ENCODE measurements at regions of chr16 and their contacts with region 1.

Region 1: DNA sequence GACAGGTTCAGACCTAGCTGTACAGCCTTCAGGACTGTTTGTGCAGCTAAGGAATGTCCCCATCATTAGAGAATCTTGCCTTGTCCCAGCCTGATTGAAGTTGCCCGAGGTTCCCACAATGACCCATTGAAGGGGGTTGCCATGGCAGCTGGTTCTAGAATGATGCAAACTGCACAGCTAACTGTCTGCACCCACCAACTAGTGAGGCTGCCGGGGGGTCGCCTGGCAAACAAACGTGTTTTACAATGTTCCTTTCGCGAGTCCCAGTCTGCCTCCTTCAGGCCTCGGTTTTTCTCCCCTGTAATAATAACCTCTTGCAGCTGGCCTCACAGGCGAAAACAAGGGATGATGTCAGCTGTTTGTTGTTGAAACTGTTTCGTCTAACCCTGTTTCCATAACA is 5.5 kb downstream of the C16orf96 start:
- DNase-seq: no peak
- H3K4me3 ChIP-seq: no peak overlapping the region
- H3K27ac ChIP-seq: no peak overlapping the region
- H3K4me1 ChIP-seq: no peaks in the 10 kb centered on the region
- H3K27me3 ChIP-seq: peaks cover 0 to 7% of the 10 kb centered on the region in 2 experiments
- CTCF ChIP-seq: no peak
- POLR2A ChIP-seq: no peak

Region 2: DNA sequence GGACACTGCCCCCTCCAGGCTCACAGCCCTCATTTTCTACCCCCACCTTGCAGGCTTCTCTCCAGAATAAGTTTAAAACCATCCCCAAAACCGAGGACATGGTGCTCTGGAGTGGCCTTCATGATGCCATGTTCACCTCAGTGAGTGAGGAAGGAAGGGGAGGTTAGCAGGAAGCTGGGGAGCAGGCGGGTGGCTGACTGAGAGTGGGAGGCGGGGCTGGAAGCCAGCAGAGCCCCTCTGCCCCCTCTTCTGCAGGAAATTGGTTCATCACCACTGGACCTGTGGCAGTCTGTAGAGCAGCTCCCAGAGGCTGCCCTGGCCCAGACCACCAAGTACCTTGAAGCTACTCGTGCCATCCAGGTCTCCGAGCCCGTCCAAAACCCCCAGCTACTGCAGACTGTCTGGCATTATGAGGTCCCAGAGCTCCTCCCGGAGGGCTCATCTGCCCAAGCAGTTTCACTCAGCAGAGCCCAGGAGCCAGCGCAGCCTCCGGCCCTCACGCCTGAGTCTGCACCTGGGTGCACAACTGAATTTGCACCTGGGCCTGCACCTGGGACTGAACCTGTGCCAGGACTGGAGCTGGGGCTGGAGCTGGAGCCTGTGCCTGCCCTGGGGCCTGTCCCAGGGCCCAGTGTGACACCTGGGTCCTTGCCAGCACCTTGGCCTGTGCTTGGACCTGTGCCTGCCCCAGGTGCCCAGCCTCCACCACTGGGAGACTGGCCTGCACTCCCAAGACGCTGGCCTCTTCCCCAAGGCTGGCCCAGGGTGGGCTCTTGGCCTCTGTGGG is 13.5 kb after region 1 on chr16:
- CTCF ChIA-PET with region 1: no interaction called
- POLR2A ChIA-PET with region 1: no interaction called
- dilution Hi-C with region 1: no loop called
- intact Hi-C with region 1: no loop called
- DNase-seq: no peak
- H3K4me3 ChIP-seq: no peak overlapping the region
- H3K27ac ChIP-seq: no peak overlapping the region
- H3K4me1 ChIP-seq: no peaks in the 10 kb centered on the region
- H3K27me3 ChIP-seq: peaks cover 2 to 3% of the 10 kb centered on the region in 2 experiments
- CTCF ChIP-seq: no peak
- POLR2A ChIP-seq: no peak

Region 3: DNA sequence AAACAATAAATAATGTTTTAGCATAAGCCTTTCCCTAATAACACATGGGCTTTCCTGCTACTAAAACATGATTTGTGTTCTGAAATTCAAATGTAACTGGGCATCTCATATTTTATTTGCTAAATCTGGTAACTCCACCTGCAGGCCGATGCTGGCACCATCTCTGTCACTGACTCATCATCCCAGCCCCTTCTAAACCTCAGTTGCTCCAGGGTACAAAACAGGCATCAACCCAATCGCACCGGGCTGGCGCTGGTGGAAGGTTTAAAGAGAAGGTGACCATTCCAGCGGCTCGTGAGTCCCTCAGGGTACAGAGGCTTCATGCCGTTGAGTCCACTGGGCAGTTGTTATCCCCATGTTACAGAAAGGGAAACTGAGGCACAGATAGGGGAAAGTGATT is 348.2 kb after region 1 on chr16:
- CTCF ChIA-PET with region 1: no interaction called
- POLR2A ChIA-PET with region 1: no interaction called
- dilution Hi-C with region 1: no loop called
- intact Hi-C with region 1: loop called (anchors 5 kb)
- DNase-seq: no peak
- H3K4me3 ChIP-seq: no peak overlapping the region
- H3K27ac ChIP-seq: no peak overlapping the region
- H3K4me1 ChIP-seq: no peaks in the 10 kb centered on the region
- H3K27me3 ChIP-seq: no peaks in the 10 kb centered on the region
- CTCF ChIP-seq: no peak
- POLR2A ChIP-seq: no peak

Measured in endothelial cell of umbilical vein (primary cell).